ENCODE measurements at regions of chr14 and their contacts with region 1.

Region 1: DNA sequence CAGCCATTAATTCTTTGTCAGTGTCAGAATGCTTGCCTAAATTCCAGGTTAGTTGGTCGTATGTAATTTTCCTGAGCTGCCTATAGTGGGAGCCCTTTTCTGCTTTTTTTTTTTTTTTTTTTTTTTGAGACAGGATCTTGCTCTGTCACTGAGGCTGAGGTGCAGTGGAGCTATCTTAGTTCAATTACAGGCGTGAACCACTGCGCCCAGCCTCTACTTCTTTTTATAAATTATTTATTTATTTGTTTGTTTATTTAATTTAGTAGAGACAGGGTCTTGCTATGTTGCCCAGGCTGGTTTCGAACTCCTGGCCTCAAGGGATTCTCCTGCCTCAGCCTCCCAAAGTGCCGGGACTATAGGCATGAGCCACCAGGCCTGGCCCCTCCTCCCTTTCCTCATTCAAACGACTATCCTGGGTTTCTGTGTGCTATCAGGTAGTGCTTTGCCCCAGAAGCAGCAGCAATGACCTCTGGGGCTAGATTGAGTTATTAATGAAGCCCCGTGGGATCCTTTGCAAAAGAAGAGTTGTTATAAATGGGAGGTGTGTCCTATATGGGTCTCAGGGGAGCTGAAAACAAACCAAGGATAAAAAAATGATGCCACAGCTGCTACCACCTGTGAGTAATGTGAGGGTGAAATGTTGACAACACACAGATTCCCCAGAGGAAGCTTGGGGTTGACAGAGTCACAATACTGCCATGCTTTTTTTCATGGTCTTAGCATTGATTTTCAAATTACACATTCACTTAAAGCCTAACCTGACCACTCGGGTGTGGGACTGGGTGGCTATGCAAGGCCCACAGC is 34.6 kb upstream of the NFKBIA start:
- DNase-seq: no peak
- H3K4me3 ChIP-seq: no peak overlapping the region
- H3K27ac ChIP-seq: no peak overlapping the region
- H3K27me3 ChIP-seq: no peaks in the 10 kb centered on the region
- CTCF ChIP-seq: peak; percentile 63

Region 2: GRCh38 chr14:35180179-35180578 is 258.9 kb before region 1 on chr14:
- in situ Hi-C with region 1: no loop called
- DNase-seq: no peak
- H3K4me3 ChIP-seq: no peak overlapping the region
- H3K27ac ChIP-seq: no peak overlapping the region
- H3K27me3 ChIP-seq: no peaks in the 10 kb centered on the region
- CTCF ChIP-seq: no peak

Region 3: DNA sequence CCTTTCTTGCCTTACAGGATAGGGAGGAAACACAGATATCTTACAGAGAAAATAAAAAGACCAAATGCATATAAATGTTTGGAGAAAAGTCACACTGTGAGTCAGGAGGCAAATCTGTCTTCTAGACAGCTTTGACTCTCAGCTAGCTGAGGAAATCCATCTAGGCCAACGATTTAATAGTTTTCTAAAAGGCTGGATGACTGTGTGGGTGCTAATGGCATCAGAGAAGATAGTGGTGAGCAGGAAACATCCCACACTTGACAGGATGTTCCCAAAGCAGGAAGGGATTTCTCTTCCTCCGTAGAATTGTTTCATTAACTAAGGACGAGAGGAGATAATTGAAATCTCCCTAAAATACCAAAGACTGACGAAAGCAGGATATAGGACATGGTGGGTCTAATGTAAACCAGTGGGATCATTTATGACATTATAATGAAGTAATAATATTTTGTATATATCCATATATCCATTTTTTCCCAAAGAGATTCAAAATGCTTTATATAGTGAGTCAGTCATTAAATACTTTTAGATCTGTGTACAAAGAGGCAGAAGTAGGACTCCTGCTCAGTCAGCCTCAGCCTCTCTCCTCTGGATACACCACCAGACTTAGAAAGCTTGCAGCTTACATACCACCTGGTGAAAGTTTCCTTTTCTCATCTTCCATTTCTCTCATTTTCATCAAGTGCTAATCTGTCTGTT is 191.2 kb before region 1 on chr14:
- in situ Hi-C with region 1: no loop called
- DNase-seq: no peak
- H3K4me3 ChIP-seq: no peak overlapping the region
- H3K27ac ChIP-seq: no peak overlapping the region
- H3K27me3 ChIP-seq: no peaks in the 10 kb centered on the region
- CTCF ChIP-seq: no peak

Region 4: GRCh38 chr14:35687335-35687939 is 248.3 kb after region 1 on chr14:
- in situ Hi-C with region 1: loop called (anchors 25 kb)
- DNase-seq: peak; percentile 59
- H3K4me3 ChIP-seq: no peak overlapping the region
- H3K27ac ChIP-seq: no peak overlapping the region
- H3K27me3 ChIP-seq: no peaks in the 10 kb centered on the region
- CTCF ChIP-seq: peak; percentile 82

Region 5: GRCh38 chr14:35814371-35815005 is 375.4 kb after region 1 on chr14:
- in situ Hi-C with region 1: no loop called
- DNase-seq: peak; percentile 48
- H3K4me3 ChIP-seq: no peak overlapping the region
- H3K27ac ChIP-seq: no peak overlapping the region
- H3K27me3 ChIP-seq: no peaks in the 10 kb centered on the region
- CTCF ChIP-seq: peak; percentile 92